Heart right ventricle (tissue), 16 donors: ENCODE measurements at regions of chr3 and their contacts with region 1.

Region 1: DNA sequence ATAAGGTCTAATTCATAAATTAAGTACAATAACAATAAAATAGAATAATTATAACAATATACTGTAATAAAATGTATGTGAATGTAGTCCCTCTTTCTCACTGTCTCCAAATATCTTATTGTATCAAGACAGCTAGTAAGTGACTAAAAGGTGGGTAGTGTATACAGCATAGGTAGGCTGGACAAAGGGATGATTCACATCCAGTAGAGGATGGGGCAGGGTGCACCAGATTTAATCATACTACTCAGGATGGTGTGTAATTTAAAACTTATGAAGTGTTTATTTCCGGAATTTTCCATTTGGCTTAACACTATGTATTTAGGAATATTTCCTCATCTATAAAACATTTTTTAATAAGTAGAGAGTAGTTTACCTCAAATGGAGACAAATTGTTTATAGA is 876.1 kb upstream of the CADM2 start:
- DNase-seq: no peak
- ATAC-seq: no peak
- H3K4me3 ChIP-seq: no peak overlapping the region
- H3K27ac ChIP-seq: no peak overlapping the region
- H3K4me1 ChIP-seq: no peaks in the 10 kb centered on the region
- H3K27me3 ChIP-seq: no peaks in the 10 kb centered on the region
- CTCF ChIP-seq: no peak

Region 2: GRCh38 chr3:84039099-84039498 is 43.6 kb before region 1 on chr3:
- intact Hi-C with region 1: no loop called
- DNase-seq: no peak
- ATAC-seq: no peak
- H3K4me3 ChIP-seq: no peak overlapping the region
- H3K27ac ChIP-seq: no peak overlapping the region
- H3K4me1 ChIP-seq: no peaks in the 10 kb centered on the region
- H3K27me3 ChIP-seq: no peaks in the 10 kb centered on the region
- CTCF ChIP-seq: no peak

Region 3: GRCh38 chr3:85846940-85847339 is 1764.2 kb after region 1 on chr3:
- intact Hi-C with region 1: loop called in 1 of 10 experiments (anchors 5 kb)
- DNase-seq: no peak
- ATAC-seq: no peak
- H3K4me3 ChIP-seq: no peak overlapping the region
- H3K27ac ChIP-seq: no peak overlapping the region
- H3K4me1 ChIP-seq: no peaks in the 10 kb centered on the region
- H3K27me3 ChIP-seq: no peaks in the 10 kb centered on the region
- CTCF ChIP-seq: no peak